Testis (tissue), 5 donors: ENCODE measurements at regions of chr9 and their contacts with region 1.

Region 1: DNA sequence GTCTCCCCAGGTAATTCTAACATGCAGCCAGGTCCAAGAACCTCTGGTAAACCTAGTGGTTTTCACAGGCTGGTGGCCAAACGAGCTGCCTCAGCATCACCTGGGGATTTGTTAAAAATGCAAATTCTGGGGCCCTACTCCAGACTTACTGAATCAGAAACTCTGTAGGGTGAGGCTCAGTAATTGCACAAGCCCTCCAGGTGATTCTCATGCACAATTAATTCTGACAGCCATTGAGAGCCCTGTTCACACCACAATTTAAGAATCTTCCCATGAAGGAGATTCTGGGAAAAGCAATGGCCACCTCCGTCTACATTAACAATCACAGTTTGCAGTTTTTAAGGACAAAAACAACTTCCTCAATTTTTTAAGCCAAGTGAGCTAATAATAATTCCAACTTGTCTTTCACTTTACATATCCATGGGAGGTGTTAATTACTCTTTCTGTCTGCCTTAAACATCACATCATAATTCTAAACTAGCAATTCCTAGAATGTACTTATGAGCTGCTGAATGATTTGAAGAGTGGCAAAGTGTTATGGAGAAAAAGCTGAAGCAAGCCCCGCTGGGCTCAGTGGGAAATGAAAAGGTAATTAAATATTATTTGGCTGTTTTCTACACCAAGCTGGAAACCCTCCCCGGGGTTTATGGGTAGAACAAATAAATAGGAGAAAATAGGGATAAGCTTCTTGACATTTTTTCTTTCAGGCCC is 70.0 kb downstream of the GLDC start:
- DNase-seq: no peak
- H3K4me3 ChIP-seq: no peak overlapping the region
- H3K27ac ChIP-seq: no peak overlapping the region
- H3K4me1 ChIP-seq: no peaks in the 10 kb centered on the region
- H3K27me3 ChIP-seq: no peaks in the 10 kb centered on the region
- CTCF ChIP-seq: no peak
- POLR2A ChIP-seq: no peak

Region 2: GRCh38 chr9:6353851-6354686 is 221.4 kb before region 1 on chr9:
- intact Hi-C with region 1: loop called (anchors 10 kb)
- DNase-seq: no peak
- H3K4me3 ChIP-seq: no peak overlapping the region
- H3K27ac ChIP-seq: no peak overlapping the region
- H3K4me1 ChIP-seq: no peaks in the 10 kb centered on the region
- H3K27me3 ChIP-seq: no peaks in the 10 kb centered on the region
- CTCF ChIP-seq: peak; percentile 38 to 54 (median 52)
- POLR2A ChIP-seq: no peak

Region 3: GRCh38 chr9:7115606-7116005 is 540.1 kb after region 1 on chr9:
- intact Hi-C with region 1: no loop called
- DNase-seq: no peak
- H3K4me3 ChIP-seq: no peak overlapping the region
- H3K27ac ChIP-seq: no peak overlapping the region
- H3K4me1 ChIP-seq: no peaks in the 10 kb centered on the region
- H3K27me3 ChIP-seq: no peaks in the 10 kb centered on the region
- CTCF ChIP-seq: no peak
- POLR2A ChIP-seq: no peak